GM12878 (cell line): ENCODE measurements at regions of chr9 and their contacts with region 1.

Region 1: GRCh38 chr9:18768951-18769622 is 263.9 kb downstream of the SAXO1 start:
- DNase-seq: peak; percentile 45
- ATAC-seq: peak; percentile 95
- H3K4me3 ChIP-seq: peak overlapping the region; percentile 1; the same call in 1 of the 2 replicates
- H3K27ac ChIP-seq: peak overlapping the region; percentile 83
- H3K4me1 ChIP-seq: peaks cover 13% of the 10 kb centered on the region
- H3K27me3 ChIP-seq: no peaks in the 10 kb centered on the region
- CTCF ChIP-seq: no peak
- EP300 ChIP-seq: no peak
- POLR2A ChIP-seq: no peak
- RAD21 ChIP-seq: no peak

Region 2: GRCh38 chr9:18739641-18740318 is 29.3 kb before region 1 on chr9:
- CTCF ChIA-PET with region 1: no interaction called
- POLR2A ChIA-PET with region 1: no interaction called
- RAD21 ChIA-PET with region 1: no interaction called
- SMC1A ChIA-PET with region 1: no interaction called
- in situ Hi-C with region 1: no loop called
- intact Hi-C with region 1: no loop called
- DNase-seq: no peak
- ATAC-seq: no peak
- H3K4me3 ChIP-seq: no peak overlapping the region
- H3K27ac ChIP-seq: no peak overlapping the region
- H3K4me1 ChIP-seq: no peaks in the 10 kb centered on the region
- H3K27me3 ChIP-seq: no peaks in the 10 kb centered on the region
- CTCF ChIP-seq: no peak
- EP300 ChIP-seq: no peak
- POLR2A ChIP-seq: no peak
- RAD21 ChIP-seq: no peak

Region 3: DNA sequence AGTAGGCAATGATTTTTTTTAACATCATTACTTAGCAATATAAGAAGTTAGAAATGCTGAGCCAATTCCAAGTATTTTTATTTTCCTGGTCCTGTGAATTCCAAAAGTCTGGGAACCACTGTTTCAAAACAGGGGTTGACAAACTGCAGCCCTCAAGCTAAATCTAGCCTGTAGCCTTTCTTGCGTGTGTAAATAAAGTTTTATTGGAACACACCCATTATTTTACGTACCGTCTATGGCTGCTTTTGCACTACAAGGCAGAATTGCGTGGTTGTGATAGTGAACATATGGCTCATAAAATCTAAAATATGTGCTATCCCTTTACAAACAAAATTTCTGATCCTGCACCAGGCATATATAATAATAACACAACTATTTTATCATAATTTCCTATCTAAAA is 15.2 kb before region 1 on chr9:
- CTCF ChIA-PET with region 1: interaction called, 3 read pairs
- POLR2A ChIA-PET with region 1: interaction called, 8 read pairs
- RAD21 ChIA-PET with region 1: interaction called, 4 read pairs
- SMC1A ChIA-PET with region 1: interaction called, 16 read pairs
- in situ Hi-C with region 1: no loop called
- intact Hi-C with region 1: no loop called
- DNase-seq: no peak
- ATAC-seq: no peak
- H3K4me3 ChIP-seq: no peak overlapping the region
- H3K27ac ChIP-seq: no peak overlapping the region
- H3K4me1 ChIP-seq: no peaks in the 10 kb centered on the region
- H3K27me3 ChIP-seq: no peaks in the 10 kb centered on the region
- CTCF ChIP-seq: no peak
- EP300 ChIP-seq: no peak
- POLR2A ChIP-seq: no peak
- RAD21 ChIP-seq: no peak